IMR-90 (cell line): ENCODE measurements at regions of chr12 and their contacts with region 1.

Region 1: DNA sequence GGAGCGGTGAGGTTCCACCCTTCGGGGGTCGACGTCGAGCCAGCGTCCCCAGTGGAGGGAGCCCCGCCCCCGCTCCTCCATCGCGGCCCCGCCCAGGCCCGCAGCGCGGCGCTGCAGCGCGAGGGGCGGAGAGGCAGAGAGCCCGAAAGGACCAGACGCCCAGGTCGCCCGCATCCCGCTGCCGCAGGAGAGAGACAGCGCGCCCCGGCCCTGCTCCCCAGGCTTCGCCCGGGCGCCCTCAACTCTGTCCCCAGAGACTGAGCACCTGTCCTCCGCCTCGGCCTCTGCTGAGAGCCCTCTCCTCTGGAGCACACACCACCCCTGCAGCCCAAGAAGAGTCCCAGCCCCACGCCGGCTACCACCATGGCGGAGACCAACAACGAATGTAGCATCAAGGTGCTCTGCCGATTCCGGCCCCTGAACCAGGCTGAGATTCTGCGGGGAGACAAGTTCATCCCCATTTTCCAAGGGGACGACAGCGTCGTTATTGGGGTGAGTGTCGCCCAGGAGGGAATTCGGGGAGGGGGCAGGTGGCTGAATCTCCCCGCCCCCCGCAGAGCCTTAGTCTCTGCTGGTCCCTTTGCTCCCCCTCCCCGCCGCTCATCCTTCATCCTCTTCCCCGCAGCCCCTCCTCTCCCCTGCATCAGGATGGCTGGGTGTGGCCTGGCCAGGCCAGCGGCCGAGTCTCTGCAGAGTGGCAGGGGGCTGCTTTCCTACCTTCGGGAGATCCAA is at the start of gene KIF5A:
- DNase-seq: no peak
- ATAC-seq: peak; percentile 25; the same call in 1 of the 2 replicates
- H3K4me3 ChIP-seq: peak within 1 kb of the TSS; percentile 51
- H3K27ac ChIP-seq: no peak within 1 kb of the TSS
- H3K4me1 ChIP-seq: peaks cover 10% of the 10 kb centered on the region
- H3K27me3 ChIP-seq: peaks cover 46% of the 10 kb centered on the region
- CTCF ChIP-seq: no peak
- POLR2A ChIP-seq: no peak
- RAD21 ChIP-seq: no peak
- total RNA-seq, gene KIF5A: under 0.01 and 0.18 TPM in 2 replicates

Region 2: DNA sequence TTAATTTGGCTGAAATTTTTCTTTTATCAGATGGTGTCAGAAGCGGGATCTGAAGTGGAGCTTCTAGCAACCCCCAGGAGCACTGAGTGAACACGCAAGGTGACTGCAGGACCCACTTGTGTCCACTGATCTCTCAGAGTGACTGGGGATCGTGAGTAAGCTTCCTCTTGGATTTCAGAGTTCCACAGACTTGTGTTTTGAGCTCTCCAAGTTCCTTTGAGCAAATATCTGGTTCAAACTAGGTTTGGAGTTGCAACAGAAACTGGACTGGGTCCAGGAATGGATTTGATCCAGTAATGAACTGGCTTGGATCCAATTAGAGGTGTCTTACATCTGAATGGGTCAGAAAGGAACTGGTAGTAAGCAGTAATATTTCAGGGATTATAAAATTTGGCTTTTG is 107.7 kb after region 1 on chr12:
- CTCF ChIA-PET with region 1: no interaction called
- POLR2A ChIA-PET with region 1: no interaction called
- dilution Hi-C with region 1: loop called (anchors 25 kb)
- in situ Hi-C with region 1: no loop called
- intact Hi-C with region 1: no loop called
- DNase-seq: peak; percentile 5
- ATAC-seq: no peak
- H3K4me3 ChIP-seq: no peak overlapping the region
- H3K27ac ChIP-seq: no peak overlapping the region
- H3K4me1 ChIP-seq: no peaks in the 10 kb centered on the region
- H3K27me3 ChIP-seq: peaks cover 5% of the 10 kb centered on the region; the same call in 1 of the 2 replicates
- CTCF ChIP-seq: no peak
- POLR2A ChIP-seq: no peak
- RAD21 ChIP-seq: no peak